Naive thymus-derived CD4-positive, alpha-beta T cell (primary cell): ENCODE measurements at regions of chr1 and their contacts with region 1.

Region 1: DNA sequence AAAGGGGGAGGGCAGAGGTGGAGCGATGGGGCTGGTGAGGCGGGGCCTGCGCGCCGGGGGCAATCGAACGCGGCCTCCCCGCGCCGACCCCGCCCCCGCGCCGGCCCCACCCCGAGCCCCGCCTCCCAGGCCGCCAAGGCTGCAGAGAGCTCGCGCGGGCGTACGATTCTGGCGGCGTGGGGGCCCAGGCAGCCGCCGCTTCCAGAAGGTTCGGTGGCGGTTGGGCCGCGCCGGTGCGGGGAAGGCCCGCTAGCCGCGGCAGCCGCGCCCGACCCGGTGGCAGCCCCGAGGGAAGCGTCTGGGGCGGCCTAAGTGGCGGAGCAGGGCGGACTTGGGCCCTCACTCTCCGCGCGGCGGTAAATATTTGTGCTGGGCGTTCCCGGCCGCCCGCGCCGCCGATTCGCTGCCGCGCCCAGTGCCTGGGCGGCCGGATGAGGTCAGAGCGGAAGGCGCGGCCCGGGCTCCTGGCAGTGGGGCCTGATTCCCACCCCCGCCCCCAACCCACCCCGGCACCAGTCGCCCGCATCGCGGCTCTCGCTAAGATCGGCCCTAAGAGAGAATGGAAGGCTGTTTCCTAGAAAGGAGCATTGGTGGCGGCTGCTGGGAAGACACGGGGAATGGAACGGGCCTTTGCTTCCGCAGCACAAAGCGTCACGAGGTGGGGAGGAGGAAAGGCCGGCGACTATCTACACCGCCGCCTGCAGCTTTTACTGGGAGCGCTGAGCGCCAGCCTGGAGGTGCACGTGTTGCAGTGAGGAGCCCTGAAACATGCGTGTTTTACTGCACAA is at the start of gene ACOT7:
- DNase-seq: peak; percentile 84 to 93 (median 89)
- ATAC-seq: peak; percentile 96
- H3K4me3 ChIP-seq: peak within 1 kb of the TSS; percentile 75
- H3K4me3 Mint-ChIP-seq: peak within 1 kb of the TSS; percentile 87 to 97 (median 90)
- H3K27ac ChIP-seq: peak within 1 kb of the TSS; percentile 88
- H3K27ac Mint-ChIP-seq: peak within 1 kb of the TSS; percentile 85 to 98 (median 95)
- H3K4me1 ChIP-seq: peaks cover 13 to 22% of the 10 kb centered on the region in 2 donors
- H3K4me1 Mint-ChIP-seq: peaks cover 16 to 47% (median 32%) of the 10 kb centered on the region in 7 donors
- H3K27me3 ChIP-seq: no peaks in the 10 kb centered on the region
- H3K27me3 Mint-ChIP-seq: peaks cover 0 to 5% (median 0%) of the 10 kb centered on the region in 5 donors
- total RNA-seq, gene ACOT7: 2.5 to 75.6 (median 3.4) TPM

Region 2: GRCh38 chr1:5992026-5992813 is 401.4 kb before region 1 on chr1 and contains the start of gene NPHP4:
- CTCF ChIA-PET with region 1: no interaction called
- POLR2A ChIA-PET with region 1: no interaction called
- intact Hi-C with region 1: loop called (anchors 1 to 5 kb)
- DNase-seq: peak; percentile 95 to 99 (median 99)
- ATAC-seq: peak; percentile 93
- H3K4me3 ChIP-seq: peak within 1 kb of the TSS; percentile 88
- H3K4me3 Mint-ChIP-seq: peak within 1 kb of the TSS; percentile 88 to 100 (median 96)
- H3K27ac ChIP-seq: peak within 1 kb of the TSS; percentile 94
- H3K27ac Mint-ChIP-seq: peak within 1 kb of the TSS; percentile 88 to 97 (median 96)
- H3K4me1 ChIP-seq: peaks cover 23 to 32% of the 10 kb centered on the region in 2 donors
- H3K4me1 Mint-ChIP-seq: peaks cover 23 to 49% (median 40%) of the 10 kb centered on the region in 7 donors
- H3K27me3 ChIP-seq: no peaks in the 10 kb centered on the region
- H3K27me3 Mint-ChIP-seq: peaks cover 0 to 2% (median 0%) of the 10 kb centered on the region in 5 donors
- total RNA-seq, gene NPHP4: 9.0 to 20.6 (median 11.1) TPM

Region 3: GRCh38 chr1:6127587-6128163 is 265.9 kb before region 1 on chr1:
- CTCF ChIA-PET with region 1: no interaction called
- POLR2A ChIA-PET with region 1: no interaction called
- intact Hi-C with region 1: loop called in 1 of 2 experiments (anchors 5 kb)
- DNase-seq: peak; percentile 42 to 76 (median 67)
- ATAC-seq: peak; percentile 96
- H3K4me3 ChIP-seq: no peak overlapping the region
- H3K4me3 Mint-ChIP-seq: peak overlapping the region in 4 of 10 donors; percentile 25 to 73 (median 30)
- H3K27ac ChIP-seq: no peak overlapping the region
- H3K27ac Mint-ChIP-seq: no peak overlapping the region
- H3K4me1 ChIP-seq: peaks cover 0 to 3% of the 10 kb centered on the region in 2 donors
- H3K4me1 Mint-ChIP-seq: peaks cover 0 to 8% (median 0%) of the 10 kb centered on the region in 7 donors
- H3K27me3 ChIP-seq: no peaks in the 10 kb centered on the region
- H3K27me3 Mint-ChIP-seq: peaks cover 0 to 6% (median 0%) of the 10 kb centered on the region in 5 donors

Region 4: DNA sequence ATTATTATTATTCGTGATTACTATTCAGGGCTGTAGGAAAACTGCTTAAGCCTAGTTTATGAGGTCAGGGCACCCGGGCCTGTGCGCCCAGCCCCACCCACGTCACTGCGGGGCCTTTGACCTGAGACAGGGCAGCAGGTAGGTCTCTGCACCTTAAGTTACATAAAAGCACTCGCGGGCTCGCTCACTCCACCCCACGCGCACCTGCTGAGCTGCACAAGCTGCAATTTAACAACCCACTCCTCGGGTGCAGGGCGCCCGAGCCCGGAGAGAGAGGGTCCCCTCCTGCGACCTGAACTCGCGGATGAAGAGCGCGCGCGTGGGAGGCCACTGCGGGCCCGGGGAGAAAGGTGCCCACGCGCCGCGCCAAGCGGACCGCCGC is 158.3 kb before region 1 on chr1:
- CTCF ChIA-PET with region 1: no interaction called
- POLR2A ChIA-PET with region 1: interaction called, 3 read pairs
- intact Hi-C with region 1: loop called in 1 of 2 experiments (anchors 1 kb)
- DNase-seq: no peak
- ATAC-seq: peak; percentile 3
- H3K4me3 ChIP-seq: peak overlapping the region; percentile 43
- H3K4me3 Mint-ChIP-seq: peak overlapping the region; percentile 79 to 90 (median 87)
- H3K27ac ChIP-seq: peak overlapping the region; percentile 66
- H3K27ac Mint-ChIP-seq: peak overlapping the region in 6 of 9 donors; percentile 28 to 78 (median 47)
- H3K4me1 ChIP-seq: peaks cover 0 to 12% of the 10 kb centered on the region in 2 donors
- H3K4me1 Mint-ChIP-seq: peaks cover 0 to 28% (median 18%) of the 10 kb centered on the region in 7 donors
- H3K27me3 ChIP-seq: no peaks in the 10 kb centered on the region
- H3K27me3 Mint-ChIP-seq: peaks cover 11 to 15% (median 12%) of the 10 kb centered on the region in 5 donors

Region 5: GRCh38 chr1:6359216-6360116 is 34.1 kb before region 1 on chr1:
- CTCF ChIA-PET with region 1: interaction called, 5 read pairs
- POLR2A ChIA-PET with region 1: interaction called, 5 read pairs
- intact Hi-C with region 1: loop called (anchors 1 to 2 kb)
- DNase-seq: peak in 7 of 9 donors; percentile 31 to 62 (median 34)
- ATAC-seq: peak; percentile 66
- H3K4me3 ChIP-seq: peak overlapping the region; percentile 57
- H3K4me3 Mint-ChIP-seq: peak overlapping the region; percentile 52 to 83 (median 73)
- H3K27ac ChIP-seq: peak overlapping the region; percentile 65
- H3K27ac Mint-ChIP-seq: peak overlapping the region; percentile 82 to 96 (median 89)
- H3K4me1 ChIP-seq: peaks cover 28 to 41% of the 10 kb centered on the region in 2 donors
- H3K4me1 Mint-ChIP-seq: peaks cover 12 to 66% (median 55%) of the 10 kb centered on the region in 7 donors
- H3K27me3 ChIP-seq: no peaks in the 10 kb centered on the region
- H3K27me3 Mint-ChIP-seq: no peaks in the 10 kb centered on the region

Region 6: GRCh38 chr1:6624710-6625583 is 231.4 kb after region 1 on chr1 and contains the start of gene THAP3:
- CTCF ChIA-PET with region 1: no interaction called
- POLR2A ChIA-PET with region 1: no interaction called
- intact Hi-C with region 1: loop called in 1 of 2 experiments (anchors 5 kb)
- DNase-seq: peak; percentile 77 to 90 (median 87)
- ATAC-seq: peak; percentile 99
- H3K4me3 ChIP-seq: peak within 1 kb of the TSS; percentile 52
- H3K4me3 Mint-ChIP-seq: peak within 1 kb of the TSS; percentile 86 to 97 (median 92)
- H3K27ac ChIP-seq: peak within 1 kb of the TSS; percentile 78
- H3K27ac Mint-ChIP-seq: peak within 1 kb of the TSS; percentile 72 to 96 (median 86)
- H3K4me1 ChIP-seq: peaks cover 13 to 18% of the 10 kb centered on the region in 2 donors
- H3K4me1 Mint-ChIP-seq: peaks cover 11 to 39% (median 30%) of the 10 kb centered on the region in 7 donors
- H3K27me3 ChIP-seq: no peaks in the 10 kb centered on the region
- H3K27me3 Mint-ChIP-seq: no peaks in the 10 kb centered on the region
- total RNA-seq, gene THAP3: 14.1 to 30.5 (median 20.3) TPM

Region 7: DNA sequence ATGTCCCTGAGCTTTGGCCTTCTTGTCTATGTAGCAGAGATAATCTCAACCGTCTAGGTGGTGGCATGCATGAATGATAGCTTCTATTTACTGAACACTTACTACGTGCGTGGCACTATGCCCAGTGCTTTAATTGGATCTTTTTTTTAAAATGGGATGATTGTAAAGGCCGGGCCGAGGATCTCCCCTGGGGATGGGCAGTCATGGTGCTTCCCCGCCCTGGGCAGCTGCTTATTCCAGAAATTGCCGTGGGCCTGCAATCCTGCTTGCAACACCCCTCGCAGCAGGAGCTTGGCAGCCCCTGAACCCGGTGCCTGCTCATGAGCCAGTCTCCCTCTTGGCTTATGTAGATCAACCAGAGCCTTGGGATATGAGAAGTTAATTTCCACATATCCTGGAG is 752.4 kb after region 1 on chr1:
- CTCF ChIA-PET with region 1: no interaction called
- POLR2A ChIA-PET with region 1: no interaction called
- intact Hi-C with region 1: no loop called
- DNase-seq: no peak
- ATAC-seq: no peak
- H3K4me3 ChIP-seq: no peak overlapping the region
- H3K4me3 Mint-ChIP-seq: no peak overlapping the region
- H3K27ac ChIP-seq: no peak overlapping the region
- H3K27ac Mint-ChIP-seq: no peak overlapping the region
- H3K4me1 ChIP-seq: no peaks in the 10 kb centered on the region
- H3K4me1 Mint-ChIP-seq: no peaks in the 10 kb centered on the region
- H3K27me3 ChIP-seq: no peaks in the 10 kb centered on the region
- H3K27me3 Mint-ChIP-seq: no peaks in the 10 kb centered on the region

Region 8: DNA sequence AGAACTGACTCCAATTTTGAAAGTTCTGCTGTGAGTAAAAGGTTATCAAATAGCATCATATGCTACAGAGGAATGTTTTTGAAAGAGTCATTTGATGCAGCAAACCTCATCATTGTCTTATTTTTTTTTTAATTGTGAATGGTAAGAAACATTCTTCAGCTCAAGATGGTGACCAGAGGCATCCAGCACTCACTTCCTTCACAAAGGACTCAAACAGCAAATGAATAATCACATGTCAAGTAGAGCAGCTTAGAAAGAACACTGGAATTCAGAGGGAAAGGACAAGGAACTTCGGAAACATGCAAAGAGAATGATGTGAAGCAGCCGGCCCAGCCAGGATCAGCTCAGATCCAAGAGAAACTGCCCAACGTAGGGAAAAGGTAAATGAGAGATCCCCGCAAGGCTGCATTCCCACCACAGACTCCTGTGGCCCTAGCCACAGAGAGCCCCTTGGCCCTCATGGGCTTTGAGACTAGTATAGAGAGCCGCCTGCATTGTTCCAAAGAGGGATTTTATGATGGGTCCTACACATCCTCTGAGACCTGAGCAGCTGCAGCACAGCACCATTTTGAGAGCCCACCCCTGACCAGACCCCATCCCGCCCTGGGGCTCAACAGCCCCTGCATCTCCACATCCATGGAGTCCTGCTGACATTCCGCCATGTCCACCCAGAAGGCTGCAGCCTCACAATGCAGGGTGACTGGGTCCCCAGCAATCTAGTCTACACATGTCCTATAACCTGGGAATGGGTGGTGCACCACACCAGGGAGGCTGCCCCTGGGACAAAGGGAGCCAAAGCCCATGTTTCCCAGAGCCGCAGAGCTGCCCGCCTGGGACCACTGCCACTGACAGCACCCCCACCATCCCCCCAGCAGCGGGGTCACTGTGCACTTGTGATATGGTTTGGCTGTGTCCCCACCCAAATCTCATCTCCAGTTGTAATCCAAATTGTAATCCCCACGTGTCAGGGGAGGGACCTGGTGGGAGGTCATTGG is 1480.5 kb after region 1 on chr1:
- CTCF ChIA-PET with region 1: no interaction called
- POLR2A ChIA-PET with region 1: no interaction called
- intact Hi-C with region 1: no loop called
- DNase-seq: no peak
- ATAC-seq: no peak
- H3K4me3 ChIP-seq: no peak overlapping the region
- H3K4me3 Mint-ChIP-seq: no peak overlapping the region
- H3K27ac ChIP-seq: no peak overlapping the region
- H3K27ac Mint-ChIP-seq: no peak overlapping the region
- H3K4me1 ChIP-seq: no peaks in the 10 kb centered on the region
- H3K4me1 Mint-ChIP-seq: peaks cover 0 to 5% (median 0%) of the 10 kb centered on the region in 7 donors
- H3K27me3 ChIP-seq: no peaks in the 10 kb centered on the region
- H3K27me3 Mint-ChIP-seq: peaks cover 4 to 15% (median 5%) of the 10 kb centered on the region in 5 donors